ENCODE measurements at regions of chr17 and their contacts with region 1.

Region 1: GRCh38 chr17:29640413-29640812 is 17.7 kb upstream of the CORO6 start:
- DNase-seq: no peak
- ATAC-seq: peak; percentile 45

Region 2: GRCh38 chr17:29760761-29761696 is 120.6 kb after region 1 on chr17:
- intact Hi-C with region 1: loop called (anchors 5 kb)
- DNase-seq: peak; percentile 97
- ATAC-seq: peak; percentile 98

Region 3: GRCh38 chr17:29777663-29778062 is 137.2 kb after region 1 on chr17:
- intact Hi-C with region 1: loop called (anchors 1 kb)
- DNase-seq: no peak
- ATAC-seq: no peak